ENCODE measurements at regions of chr16 and their contacts with region 1.

Region 1: GRCh38 chr16:7025616-7026190 is 306.9 kb upstream of the RBFOX1 start:
- DNase-seq: no peak

Region 2: GRCh38 chr16:6932871-6933390 is 92.8 kb before region 1 on chr16:
- intact Hi-C with region 1: no loop called
- DNase-seq: no peak

Region 3: GRCh38 chr16:8173111-8173644 is 1147.5 kb after region 1 on chr16:
- intact Hi-C with region 1: loop called (anchors 10 kb)
- DNase-seq: peak; percentile 77